GM12878 (cell line): ENCODE measurements at regions of chr3 and their contacts with region 1.

Region 1: DNA sequence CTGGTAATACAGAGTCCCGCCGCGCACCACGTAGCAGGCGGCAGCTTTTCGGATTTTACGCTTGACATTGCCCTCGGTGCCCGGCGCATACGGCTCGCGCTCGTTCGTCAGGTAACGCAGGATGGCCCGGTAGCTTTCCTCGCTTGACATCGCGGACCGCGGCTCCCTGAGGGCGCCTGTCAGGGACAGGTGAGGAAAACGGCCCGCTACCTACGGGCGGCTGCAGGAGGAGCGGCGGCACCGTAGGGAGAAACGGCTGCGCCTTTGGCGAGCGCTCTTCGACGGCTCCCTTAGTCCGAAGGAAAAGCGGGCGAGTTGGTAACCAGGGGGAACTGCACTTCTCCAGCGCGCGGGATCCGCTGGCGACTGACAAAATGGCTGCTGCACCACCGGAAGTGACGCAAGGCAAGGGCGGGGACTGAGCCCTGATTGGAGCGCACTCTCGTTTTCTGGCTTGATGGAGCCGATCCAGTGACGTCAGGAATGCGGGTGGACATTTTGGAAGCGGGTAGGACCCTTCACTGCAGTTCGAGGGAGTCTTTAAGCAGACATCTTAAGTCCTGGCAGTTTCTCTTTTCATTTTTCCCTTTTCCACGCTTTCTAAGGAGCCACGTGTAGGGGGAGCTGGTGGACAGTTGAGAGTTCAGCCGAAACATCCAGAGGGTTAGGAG is at the start of gene ZBTB11:
- DNase-seq: peak; percentile 99
- ATAC-seq: peak; percentile 87
- H3K4me3 ChIP-seq: peak within 1 kb of the TSS; percentile 78
- H3K27ac ChIP-seq: peak within 1 kb of the TSS; percentile 86
- H3K4me1 ChIP-seq: no peaks in the 10 kb centered on the region
- H3K27me3 ChIP-seq: no peaks in the 10 kb centered on the region
- CTCF ChIP-seq: peak; percentile 9 to 55 (median 35); a peak in 3 of 6 replicates
- EP300 ChIP-seq: 0 out of 4 replicates have a peak, but pooled peaks of 1 of the 2 experiments have one; percentile 14
- POLR2A ChIP-seq: peak; percentile 78
- RAD21 ChIP-seq: no peak
- polyA plus RNA-seq, gene ZBTB11: 3.5 to 5.0 TPM

Region 2: GRCh38 chr3:101512646-101513418 is 164.1 kb before region 1 on chr3 and contains the start of gene SENP7:
- CTCF ChIA-PET with region 1: no interaction called
- POLR2A ChIA-PET with region 1: no interaction called
- RAD21 ChIA-PET with region 1: no interaction called
- SMC1A ChIA-PET with region 1: no interaction called
- in situ Hi-C with region 1: no loop called
- intact Hi-C with region 1: loop called (anchors 2 kb)
- DNase-seq: peak; percentile 48
- ATAC-seq: peak; percentile 79
- H3K4me3 ChIP-seq: peak within 1 kb of the TSS; percentile 97
- H3K27ac ChIP-seq: peak within 1 kb of the TSS; percentile 97
- H3K4me1 ChIP-seq: no peaks in the 10 kb centered on the region
- H3K27me3 ChIP-seq: no peaks in the 10 kb centered on the region
- CTCF ChIP-seq: no peak
- EP300 ChIP-seq: no peak
- POLR2A ChIP-seq: peak; percentile 6; the same call in 1 of the 2 replicates
- RAD21 ChIP-seq: no peak
- polyA plus RNA-seq, gene SENP7: 2.6 to 2.8 TPM

Region 3: GRCh38 chr3:101665851-101666250 is 11.0 kb before region 1 on chr3:
- CTCF ChIA-PET with region 1: interaction called, 4 read pairs
- POLR2A ChIA-PET with region 1: interaction called, 8 read pairs
- RAD21 ChIA-PET with region 1: no interaction called
- SMC1A ChIA-PET with region 1: interaction called, 11 read pairs
- in situ Hi-C with region 1: no loop called
- intact Hi-C with region 1: no loop called
- DNase-seq: no peak
- ATAC-seq: no peak
- H3K4me3 ChIP-seq: no peak overlapping the region
- H3K27ac ChIP-seq: no peak overlapping the region
- H3K4me1 ChIP-seq: no peaks in the 10 kb centered on the region
- H3K27me3 ChIP-seq: no peaks in the 10 kb centered on the region
- CTCF ChIP-seq: no peak
- EP300 ChIP-seq: no peak
- POLR2A ChIP-seq: no peak
- RAD21 ChIP-seq: no peak

Region 4: DNA sequence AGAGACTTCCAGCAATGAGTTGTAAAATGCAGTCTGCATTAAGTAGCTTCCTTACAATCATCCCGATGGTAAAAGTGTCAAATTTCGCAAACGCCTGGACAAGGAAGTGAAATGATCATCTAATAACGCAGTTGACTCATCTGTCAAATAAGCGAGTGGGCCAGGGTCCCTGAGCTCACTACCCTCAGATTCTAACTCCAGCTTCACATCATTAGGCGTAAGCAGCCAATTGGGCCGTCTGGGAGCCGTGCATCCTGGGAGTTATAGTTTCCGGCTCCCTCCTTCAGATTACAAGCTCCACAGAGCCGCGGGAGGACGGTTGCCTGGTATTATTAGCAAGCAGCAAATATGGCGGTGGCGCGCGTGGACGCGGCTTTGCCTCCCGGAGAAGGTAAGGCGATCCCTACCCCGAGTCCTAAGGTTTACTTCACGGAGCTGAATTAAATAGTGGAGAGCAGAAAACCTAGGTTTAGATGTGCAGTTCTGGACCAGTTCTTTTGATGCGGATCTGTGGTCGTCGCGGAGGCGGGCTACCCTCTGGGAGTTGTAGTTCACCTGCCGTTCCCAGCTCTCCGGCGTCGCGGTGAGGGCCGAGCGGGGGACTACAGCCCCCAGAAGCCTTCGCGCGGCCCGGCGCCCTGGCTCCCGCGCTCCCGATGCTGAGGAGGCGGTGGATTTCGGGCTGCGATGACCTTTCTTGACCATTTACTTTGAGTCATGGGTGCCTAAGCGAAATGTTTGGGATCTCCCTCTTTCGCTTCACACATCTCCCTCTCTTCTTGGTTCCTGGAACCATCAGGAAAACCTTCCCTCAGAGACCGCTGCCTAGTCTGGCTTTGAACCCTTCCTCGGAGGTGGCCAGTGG is 47.7 kb after region 1 on chr3 and contains the start of gene CEP97:
- CTCF ChIA-PET with region 1: interaction called, 5 read pairs
- POLR2A ChIA-PET with region 1: interaction called, 4 read pairs
- RAD21 ChIA-PET with region 1: interaction called, 7 read pairs
- SMC1A ChIA-PET with region 1: interaction called, 4 read pairs
- in situ Hi-C with region 1: no loop called
- intact Hi-C with region 1: loop called (anchors 2 kb)
- DNase-seq: peak; percentile 78
- ATAC-seq: peak; percentile 95
- H3K4me3 ChIP-seq: peak within 1 kb of the TSS; percentile 79
- H3K27ac ChIP-seq: peak within 1 kb of the TSS; percentile 38
- H3K4me1 ChIP-seq: peaks cover 15% of the 10 kb centered on the region
- H3K27me3 ChIP-seq: no peaks in the 10 kb centered on the region
- CTCF ChIP-seq: no peak
- EP300 ChIP-seq: no peak
- POLR2A ChIP-seq: peak; percentile 52; the same call in 1 of the 2 replicates
- RAD21 ChIP-seq: no peak
- polyA plus RNA-seq, gene CEP97: 1.9 to 4.3 TPM